ENCODE measurements at regions of chr22 and their contacts with region 1.

Region 1: GRCh38 chr22:38744981-38745380 is 10.8 kb downstream of the SUN2 start:
- DNase-seq: no peak
- H3K4me3 ChIP-seq: no peak overlapping the region
- H3K27ac ChIP-seq: no peak overlapping the region
- H3K4me1 ChIP-seq: peaks cover 7 to 32% (median 17%) of the 10 kb centered on the region in 3 donors
- H3K27me3 ChIP-seq: no peaks in the 10 kb centered on the region
- CTCF ChIP-seq: no peak
- POLR2A ChIP-seq: no peak

Region 2: GRCh38 chr22:38705235-38706100 is 39.5 kb before region 1 on chr22 and contains the start of gene GTPBP1:
- intact Hi-C with region 1: loop called (anchors 5 kb)
- DNase-seq: peak; percentile 99
- H3K4me3 ChIP-seq: peak within 1 kb of the TSS; percentile 87 to 99 (median 96)
- H3K27ac ChIP-seq: peak within 1 kb of the TSS; percentile 96 to 100 (median 98)
- H3K4me1 ChIP-seq: peaks cover 14 to 56% (median 27%) of the 10 kb centered on the region in 3 donors
- H3K27me3 ChIP-seq: no peaks in the 10 kb centered on the region
- CTCF ChIP-seq: peak in 2 of 6 experiments; percentile 4 to 12
- POLR2A ChIP-seq: peak in 3 of 4 donors; percentile 88 to 99 (median 97)
- total RNA-seq, gene GTPBP1: 15.3 to 37.4 (median 32.0) TPM

Region 3: GRCh38 chr22:38716826-38717225 is 28.2 kb before region 1 on chr22:
- intact Hi-C with region 1: no loop called
- DNase-seq: no peak
- H3K4me3 ChIP-seq: no peak overlapping the region
- H3K27ac ChIP-seq: peak overlapping the region in 1 of 4 donors; percentile 72
- H3K4me1 ChIP-seq: peaks cover 4 to 59% (median 34%) of the 10 kb centered on the region in 3 donors
- H3K27me3 ChIP-seq: no peaks in the 10 kb centered on the region
- CTCF ChIP-seq: no peak
- POLR2A ChIP-seq: no peak

Region 4: GRCh38 chr22:38782402-38783094 is 37.6 kb after region 1 on chr22:
- intact Hi-C with region 1: no loop called
- DNase-seq: no peak
- H3K4me3 ChIP-seq: no peak overlapping the region
- H3K27ac ChIP-seq: no peak overlapping the region
- H3K4me1 ChIP-seq: peaks cover 0 to 10% (median 0%) of the 10 kb centered on the region in 3 donors
- H3K27me3 ChIP-seq: no peaks in the 10 kb centered on the region
- CTCF ChIP-seq: no peak
- POLR2A ChIP-seq: no peak

Region 5: GRCh38 chr22:38941488-38941987 is 196.6 kb after region 1 on chr22:
- intact Hi-C with region 1: no loop called
- DNase-seq: no peak
- H3K4me3 ChIP-seq: peak overlapping the region in 1 of 4 donors; percentile 40
- H3K27ac ChIP-seq: no peak overlapping the region
- H3K4me1 ChIP-seq: peaks cover 0 to 15% (median 0%) of the 10 kb centered on the region in 3 donors
- H3K27me3 ChIP-seq: peaks cover 0 to 29% (median 0%) of the 10 kb centered on the region in 4 donors
- CTCF ChIP-seq: no peak
- POLR2A ChIP-seq: no peak

Measured in esophagus squamous epithelium (tissue), 5 donors.